ENCODE measurements at regions of chr7 and their contacts with region 1.

Region 1: GRCh38 chr7:75762314-75762917 is 9.6 kb downstream of the CCL26 start:
- DNase-seq: peak; percentile 64
- ATAC-seq: peak; percentile 90
- H3K4me3 ChIP-seq: no peak overlapping the region
- H3K4me3 Mint-ChIP-seq: no peak overlapping the region
- H3K27ac ChIP-seq: no peak overlapping the region
- H3K27ac Mint-ChIP-seq: no peak overlapping the region
- H3K4me1 ChIP-seq: no peaks in the 10 kb centered on the region
- H3K4me1 Mint-ChIP-seq: peaks cover 5% of the 10 kb centered on the region
- H3K27me3 ChIP-seq: no peaks in the 10 kb centered on the region
- H3K27me3 Mint-ChIP-seq: no peaks in the 10 kb centered on the region
- CTCF ChIP-seq: peak; percentile 81

Region 2: DNA sequence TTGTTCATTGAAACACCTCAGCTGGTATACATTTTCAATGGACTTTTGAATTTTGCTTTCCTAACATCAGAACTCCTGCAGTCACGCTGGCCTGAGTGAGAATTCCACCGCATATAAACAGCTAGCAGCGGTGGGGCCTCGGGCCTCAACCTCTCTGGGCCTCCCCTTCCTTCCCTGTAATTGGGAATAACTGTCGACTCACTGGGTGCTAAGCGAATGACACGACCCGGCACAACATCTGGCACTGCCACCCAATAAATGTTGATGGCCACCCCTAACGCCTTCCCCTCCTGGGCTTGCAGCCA is 689.5 kb before region 1 on chr7:
- CTCF ChIA-PET with region 1: interaction called, 4 read pairs
- POLR2A ChIA-PET with region 1: no interaction called
- intact Hi-C with region 1: loop called (anchors 2 kb)
- DNase-seq: no peak
- ATAC-seq: no peak
- H3K4me3 ChIP-seq: peak overlapping the region; percentile 21 to 79 (median 70)
- H3K4me3 Mint-ChIP-seq: peak overlapping the region; percentile 98
- H3K27ac ChIP-seq: peak overlapping the region; percentile 43 to 90
- H3K27ac Mint-ChIP-seq: peak overlapping the region; percentile 89
- H3K4me1 ChIP-seq: peaks cover 5 to 12% of the 10 kb centered on the region in 2 donors
- H3K4me1 Mint-ChIP-seq: peaks cover 12% of the 10 kb centered on the region
- H3K27me3 ChIP-seq: no peaks in the 10 kb centered on the region
- H3K27me3 Mint-ChIP-seq: no peaks in the 10 kb centered on the region
- CTCF ChIP-seq: no peak

Region 3: GRCh38 chr7:75531359-75531821 is 231.0 kb before region 1 on chr7:
- CTCF ChIA-PET with region 1: interaction called, 3 read pairs
- POLR2A ChIA-PET with region 1: no interaction called
- intact Hi-C with region 1: loop called (anchors 5 kb)
- DNase-seq: no peak
- ATAC-seq: no peak
- H3K4me3 ChIP-seq: no peak overlapping the region
- H3K4me3 Mint-ChIP-seq: no peak overlapping the region
- H3K27ac ChIP-seq: no peak overlapping the region
- H3K27ac Mint-ChIP-seq: no peak overlapping the region
- H3K4me1 ChIP-seq: peaks cover 12 to 14% of the 10 kb centered on the region in 2 donors
- H3K4me1 Mint-ChIP-seq: peaks cover 23% of the 10 kb centered on the region
- H3K27me3 ChIP-seq: no peaks in the 10 kb centered on the region
- H3K27me3 Mint-ChIP-seq: no peaks in the 10 kb centered on the region
- CTCF ChIP-seq: no peak

Region 4: GRCh38 chr7:75642810-75643486 is 119.5 kb before region 1 on chr7:
- CTCF ChIA-PET with region 1: interaction called, 8 read pairs
- POLR2A ChIA-PET with region 1: no interaction called
- intact Hi-C with region 1: loop called (anchors 1 kb)
- DNase-seq: peak; percentile 81
- ATAC-seq: peak; percentile 82
- H3K4me3 ChIP-seq: no peak overlapping the region
- H3K4me3 Mint-ChIP-seq: peak overlapping the region; percentile 13
- H3K27ac ChIP-seq: no peak overlapping the region
- H3K27ac Mint-ChIP-seq: no peak overlapping the region
- H3K4me1 ChIP-seq: peaks cover 11 to 14% of the 10 kb centered on the region in 2 donors
- H3K4me1 Mint-ChIP-seq: peaks cover 14% of the 10 kb centered on the region
- H3K27me3 ChIP-seq: peaks cover 0 to 12% (median 4%) of the 10 kb centered on the region in 4 experiments
- H3K27me3 Mint-ChIP-seq: no peaks in the 10 kb centered on the region
- CTCF ChIP-seq: peak; percentile 86

Region 5: GRCh38 chr7:75662579-75663301 is 99.7 kb before region 1 on chr7:
- CTCF ChIA-PET with region 1: interaction called, 10 read pairs
- POLR2A ChIA-PET with region 1: no interaction called
- intact Hi-C with region 1: no loop called
- DNase-seq: peak; percentile 83
- ATAC-seq: peak; percentile 86
- H3K4me3 ChIP-seq: peak overlapping the region in 2 of 5 experiments; percentile 13 to 50
- H3K4me3 Mint-ChIP-seq: peak overlapping the region; percentile 70
- H3K27ac ChIP-seq: peak overlapping the region; percentile 49 to 60
- H3K27ac Mint-ChIP-seq: peak overlapping the region; percentile 86
- H3K4me1 ChIP-seq: peaks cover 18 to 22% of the 10 kb centered on the region in 2 donors
- H3K4me1 Mint-ChIP-seq: peaks cover 26% of the 10 kb centered on the region
- H3K27me3 ChIP-seq: no peaks in the 10 kb centered on the region
- H3K27me3 Mint-ChIP-seq: no peaks in the 10 kb centered on the region
- CTCF ChIP-seq: no peak